ENCODE measurements at regions of chr17 and their contacts with region 1.

Region 1: GRCh38 chr17:68457539-68458259 is 403 bp upstream of the WIPI1 start:
- DNase-seq: peak; percentile 98
- H3K4me3 Mint-ChIP-seq: peak overlapping the region; percentile 72
- H3K27ac Mint-ChIP-seq: peak overlapping the region; percentile 68
- H3K4me1 Mint-ChIP-seq: peaks cover 58% of the 10 kb centered on the region
- H3K27me3 Mint-ChIP-seq: no peaks in the 10 kb centered on the region

Region 2: DNA sequence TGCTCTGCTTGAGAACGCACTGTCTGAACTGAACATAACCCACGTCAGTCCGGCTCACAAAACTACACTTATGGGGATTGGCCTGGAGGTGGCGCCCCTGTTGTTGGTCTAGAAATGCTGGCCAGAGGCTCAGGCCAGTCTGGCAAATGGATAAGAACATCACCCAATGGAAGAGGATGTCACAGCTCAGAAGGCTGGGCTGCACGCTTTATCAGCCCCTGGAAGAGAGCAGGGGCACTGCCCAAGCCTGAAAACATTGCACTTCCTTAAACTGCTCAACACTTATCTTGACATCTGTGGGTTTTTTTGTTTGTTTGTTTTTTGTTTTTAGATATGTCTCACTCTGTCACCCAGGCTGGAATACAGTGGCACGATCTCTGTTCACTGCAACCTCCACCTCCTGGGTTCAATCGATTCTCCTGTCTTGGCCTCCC is 657.2 kb before region 1 on chr17:
- CTCF ChIA-PET with region 1: no interaction called
- POLR2A ChIA-PET with region 1: no interaction called
- intact Hi-C with region 1: loop called (anchors 10 kb)
- DNase-seq: peak; percentile 75
- H3K4me3 Mint-ChIP-seq: no peak overlapping the region
- H3K27ac Mint-ChIP-seq: no peak overlapping the region
- H3K4me1 Mint-ChIP-seq: no peaks in the 10 kb centered on the region
- H3K27me3 Mint-ChIP-seq: no peaks in the 10 kb centered on the region

Region 3: GRCh38 chr17:68184816-68185436 is 272.8 kb before region 1 on chr17:
- CTCF ChIA-PET with region 1: interaction called, 13 read pairs
- POLR2A ChIA-PET with region 1: no interaction called
- intact Hi-C with region 1: loop called (anchors 1 kb)
- DNase-seq: peak; percentile 78
- H3K4me3 Mint-ChIP-seq: peak overlapping the region; percentile 50
- H3K27ac Mint-ChIP-seq: peak overlapping the region; percentile 77
- H3K4me1 Mint-ChIP-seq: peaks cover 80% of the 10 kb centered on the region
- H3K27me3 Mint-ChIP-seq: no peaks in the 10 kb centered on the region

Region 4: DNA sequence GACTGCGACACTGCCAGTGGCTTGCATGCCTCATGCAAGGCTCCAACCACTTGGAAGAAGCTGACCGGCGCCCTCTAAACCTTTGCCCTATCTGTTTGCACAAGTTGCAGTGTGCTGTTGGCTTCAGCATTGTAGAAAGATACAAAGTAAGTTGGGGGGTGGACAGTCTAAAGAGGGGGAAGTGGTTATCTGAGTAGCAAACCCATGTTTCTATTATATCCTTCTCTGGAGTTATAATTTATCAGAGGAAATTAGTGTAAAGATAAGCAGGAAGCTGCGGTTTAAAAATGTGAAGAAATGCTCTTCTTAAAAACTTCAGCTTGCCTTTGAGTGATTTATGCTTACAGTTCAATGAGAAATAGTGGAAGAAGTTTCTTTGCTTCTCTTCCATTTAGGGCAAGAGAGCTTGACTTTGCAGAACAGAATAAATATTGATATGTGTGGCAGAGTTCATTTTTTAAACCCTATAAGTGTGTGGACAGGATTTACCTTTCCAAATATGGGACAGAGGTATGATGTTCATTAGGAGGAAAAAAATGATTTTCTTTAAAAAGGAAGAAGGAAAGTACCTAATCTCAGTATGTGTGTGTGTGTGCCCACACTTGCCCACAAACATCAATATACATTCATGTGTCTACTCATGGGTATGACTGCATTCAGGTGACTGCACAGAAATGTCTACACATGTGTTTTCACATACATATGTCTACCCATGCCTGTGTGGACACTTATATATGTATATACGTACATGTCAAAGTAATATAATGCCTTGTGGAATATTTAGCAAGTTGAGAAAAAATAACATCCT is 201.8 kb before region 1 on chr17:
- CTCF ChIA-PET with region 1: interaction called, 5 read pairs
- POLR2A ChIA-PET with region 1: no interaction called
- intact Hi-C with region 1: loop called (anchors 1 kb)
- DNase-seq: peak; percentile 50
- H3K4me3 Mint-ChIP-seq: peak overlapping the region; percentile 5
- H3K27ac Mint-ChIP-seq: peak overlapping the region; percentile 84
- H3K4me1 Mint-ChIP-seq: peaks cover 84% of the 10 kb centered on the region
- H3K27me3 Mint-ChIP-seq: no peaks in the 10 kb centered on the region

Region 5: DNA sequence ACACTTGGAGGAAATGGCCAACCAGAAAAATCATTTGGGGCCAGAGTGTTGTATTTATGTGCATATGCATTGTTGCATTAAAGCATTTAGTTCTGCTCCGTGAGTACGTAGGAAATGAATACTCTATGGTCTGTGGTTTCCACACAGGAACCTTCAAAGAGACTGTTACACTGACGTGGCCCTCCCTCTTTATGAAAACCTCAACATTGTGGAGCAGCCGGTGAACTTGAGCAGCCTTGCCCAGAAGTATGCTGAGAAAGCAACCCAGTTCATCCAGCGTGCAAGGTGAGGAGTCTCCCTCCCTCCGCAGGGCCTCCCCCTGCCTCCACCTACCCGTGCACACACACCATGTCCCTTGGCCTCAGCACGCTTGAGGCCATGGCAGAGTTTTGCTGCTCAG is 101.2 kb before region 1 on chr17:
- CTCF ChIA-PET with region 1: interaction called, 3 read pairs
- POLR2A ChIA-PET with region 1: no interaction called
- intact Hi-C with region 1: loop called (anchors 1 kb)
- DNase-seq: peak; percentile 84
- H3K4me3 Mint-ChIP-seq: peak overlapping the region; percentile 40
- H3K27ac Mint-ChIP-seq: peak overlapping the region; percentile 68
- H3K4me1 Mint-ChIP-seq: peaks cover 54% of the 10 kb centered on the region
- H3K27me3 Mint-ChIP-seq: no peaks in the 10 kb centered on the region

Region 6: DNA sequence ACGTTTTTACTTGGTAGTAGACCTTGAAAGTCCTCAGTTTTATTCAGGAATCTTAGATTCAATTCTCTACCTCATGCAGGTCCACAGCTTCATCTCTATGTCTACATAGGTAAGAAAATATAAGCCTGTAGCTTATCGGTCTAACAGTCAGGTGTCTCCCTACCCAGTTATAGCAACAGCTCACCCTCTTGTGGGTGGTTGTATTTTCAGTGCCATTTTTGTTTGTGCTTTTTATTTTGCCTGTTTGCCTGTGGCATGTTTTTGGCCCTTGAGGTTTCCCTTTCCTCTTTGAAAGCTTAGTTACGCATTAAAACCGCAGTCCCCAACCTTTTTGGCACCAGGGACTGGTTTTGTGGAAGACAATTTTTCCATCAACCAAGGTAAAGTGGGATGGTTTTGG is 23.2 kb after region 1 on chr17:
- CTCF ChIA-PET with region 1: no interaction called
- POLR2A ChIA-PET with region 1: no interaction called
- intact Hi-C with region 1: no loop called
- DNase-seq: no peak
- H3K4me3 Mint-ChIP-seq: no peak overlapping the region
- H3K27ac Mint-ChIP-seq: no peak overlapping the region
- H3K4me1 Mint-ChIP-seq: no peaks in the 10 kb centered on the region
- H3K27me3 Mint-ChIP-seq: peaks cover 10% of the 10 kb centered on the region